ENCODE measurements at regions of chr4 and their contacts with region 1.

Region 1: GRCh38 chr4:78775303-78776030 is 683 bp upstream of the BMP2K start:
- H3K4me3 Mint-ChIP-seq: peak overlapping the region; percentile 86
- H3K27ac Mint-ChIP-seq: no peak overlapping the region
- H3K4me1 Mint-ChIP-seq: peaks cover 6% of the 10 kb centered on the region
- H3K27me3 Mint-ChIP-seq: no peaks in the 10 kb centered on the region

Region 2: DNA sequence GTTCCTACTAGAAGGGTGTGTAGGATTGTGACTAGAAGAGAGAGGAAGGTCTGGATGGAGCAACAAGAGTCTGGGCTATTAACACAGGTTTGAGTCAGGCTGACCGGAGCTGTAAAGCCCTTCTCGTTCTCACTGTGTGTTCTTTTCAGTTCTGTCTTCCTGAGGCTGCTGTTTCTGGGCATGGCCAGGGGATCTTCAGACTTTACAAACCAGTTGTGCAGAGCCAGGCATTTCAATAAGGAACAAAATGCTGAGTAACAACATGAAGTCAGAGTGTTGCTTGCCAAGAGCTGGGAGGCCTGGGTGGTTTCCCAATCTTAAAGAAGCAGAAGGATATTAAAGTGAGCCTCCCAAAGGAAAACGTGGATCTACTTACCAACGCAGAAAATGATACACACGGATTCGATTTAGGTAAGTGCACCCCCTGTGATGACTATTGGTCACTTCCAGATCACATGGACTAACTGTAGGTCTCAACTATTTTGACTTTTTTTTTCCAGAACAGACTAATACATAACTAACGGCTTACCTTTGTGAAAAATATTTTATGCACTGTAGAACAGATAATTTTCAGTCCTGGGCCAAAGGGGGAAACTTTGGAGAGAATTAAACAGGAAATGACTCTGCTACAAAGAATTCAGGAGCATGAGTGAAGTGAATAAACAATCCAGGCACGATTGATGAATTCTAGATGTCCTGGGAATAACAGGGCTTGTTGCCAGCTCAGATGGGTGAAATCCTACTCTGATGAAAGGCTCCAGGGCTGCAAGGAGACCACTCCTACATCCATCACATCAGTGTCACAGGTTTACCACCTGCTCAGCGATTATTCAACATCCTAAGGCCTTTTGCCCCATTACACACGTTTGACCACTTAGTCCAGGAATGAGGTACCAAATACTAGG is 129.4 kb before region 1 on chr4:
- intact Hi-C with region 1: loop called (anchors 1 kb)
- H3K4me3 Mint-ChIP-seq: peak overlapping the region; percentile 66
- H3K27ac Mint-ChIP-seq: peak overlapping the region; percentile 94
- H3K4me1 Mint-ChIP-seq: peaks cover 72% of the 10 kb centered on the region
- H3K27me3 Mint-ChIP-seq: no peaks in the 10 kb centered on the region

Region 3: GRCh38 chr4:78720994-78721677 is 54.3 kb before region 1 on chr4:
- intact Hi-C with region 1: loop called (anchors 10 kb)
- H3K4me3 Mint-ChIP-seq: peak overlapping the region; percentile 35
- H3K27ac Mint-ChIP-seq: peak overlapping the region; percentile 83
- H3K4me1 Mint-ChIP-seq: peaks cover 70% of the 10 kb centered on the region
- H3K27me3 Mint-ChIP-seq: no peaks in the 10 kb centered on the region

Region 4: DNA sequence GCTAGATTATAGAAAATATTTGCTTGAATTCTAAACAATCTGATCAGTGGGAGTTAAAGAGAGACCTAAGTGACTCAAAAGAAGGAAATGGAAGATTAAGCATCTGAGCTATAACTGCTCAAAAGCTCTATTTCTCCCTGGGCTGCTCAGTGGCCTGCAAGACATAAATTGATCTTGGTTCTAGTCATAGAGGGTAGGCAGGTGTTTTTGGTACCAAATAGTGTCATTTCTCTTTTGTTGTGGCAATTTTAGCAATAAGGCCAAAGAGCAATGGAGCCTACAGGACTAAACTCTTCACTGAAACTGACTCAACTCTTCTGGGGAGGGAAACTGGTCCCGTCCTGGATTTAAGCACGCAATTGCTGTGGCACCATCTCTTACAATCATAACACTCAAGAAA is 33.2 kb before region 1 on chr4:
- intact Hi-C with region 1: loop called (anchors 5 kb)
- H3K4me3 Mint-ChIP-seq: no peak overlapping the region
- H3K27ac Mint-ChIP-seq: no peak overlapping the region
- H3K4me1 Mint-ChIP-seq: peaks cover 13% of the 10 kb centered on the region
- H3K27me3 Mint-ChIP-seq: no peaks in the 10 kb centered on the region

Region 5: DNA sequence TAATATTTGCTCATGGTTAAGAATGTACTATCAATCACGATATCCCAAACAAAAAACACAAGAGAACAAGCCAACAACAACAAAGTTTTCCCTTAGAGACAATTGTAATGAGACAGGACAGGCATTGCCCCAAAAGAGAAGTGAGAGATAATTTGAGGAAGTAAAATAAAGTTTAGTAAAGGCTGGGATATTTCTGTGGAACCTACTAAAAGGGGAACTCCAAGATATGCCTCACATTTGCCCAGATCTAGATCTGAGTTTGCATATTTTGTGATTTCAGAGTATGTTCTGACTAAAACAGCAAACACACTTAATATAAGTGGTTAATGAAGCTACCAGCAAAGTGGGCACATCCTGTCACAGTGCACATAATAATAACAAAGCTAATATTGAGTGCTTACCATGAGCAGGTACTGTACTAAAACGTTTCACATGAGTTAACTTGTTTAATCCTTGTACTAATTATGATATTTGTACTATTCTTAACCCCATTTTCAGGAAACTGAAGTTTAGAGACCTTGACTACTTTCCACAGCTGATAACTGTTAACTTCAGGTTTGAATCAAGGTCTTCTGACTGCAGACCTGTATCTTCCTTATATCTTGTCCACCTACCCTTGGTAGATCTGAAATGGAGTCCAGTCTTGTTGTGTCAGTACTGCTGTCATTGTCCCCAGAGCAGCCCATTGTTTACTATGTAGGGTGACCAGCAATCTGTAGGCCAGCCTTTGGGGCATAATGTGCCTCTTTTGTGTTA is 25.3 kb before region 1 on chr4:
- intact Hi-C with region 1: loop called (anchors 1 kb)
- H3K4me3 Mint-ChIP-seq: peak overlapping the region; percentile 20
- H3K27ac Mint-ChIP-seq: peak overlapping the region; percentile 99
- H3K4me1 Mint-ChIP-seq: peaks cover 39% of the 10 kb centered on the region
- H3K27me3 Mint-ChIP-seq: no peaks in the 10 kb centered on the region

Region 6: DNA sequence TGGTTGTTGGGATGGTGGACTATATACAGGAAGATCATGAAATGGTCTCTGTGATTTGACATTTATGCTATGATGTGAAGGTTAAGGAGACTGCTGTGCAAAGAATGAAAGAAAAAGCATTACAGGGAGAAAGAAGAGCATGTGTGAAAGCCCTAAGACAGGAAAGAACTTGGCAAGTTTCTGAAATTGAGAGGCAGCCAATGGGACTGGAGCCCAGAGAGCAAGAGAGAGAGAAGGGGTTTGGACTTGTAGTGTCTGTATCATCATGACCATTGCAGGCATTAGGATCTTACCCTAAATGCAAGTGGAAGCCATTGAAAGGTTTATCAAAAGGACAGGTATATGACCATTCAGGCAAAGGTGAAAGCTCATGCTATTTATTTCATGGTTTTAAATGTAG is 403.3 kb after region 1 on chr4:
- intact Hi-C with region 1: no loop called
- H3K4me3 Mint-ChIP-seq: no peak overlapping the region
- H3K27ac Mint-ChIP-seq: no peak overlapping the region
- H3K4me1 Mint-ChIP-seq: no peaks in the 10 kb centered on the region
- H3K27me3 Mint-ChIP-seq: no peaks in the 10 kb centered on the region